ENCODE measurements at regions of chr13 and their contacts with region 1.

Region 1: GRCh38 chr13:99062593-99062992 is 84.7 kb upstream of the DOCK9 start:
- DNase-seq: no peak
- H3K4me3 ChIP-seq: no peak overlapping the region
- H3K4me3 Mint-ChIP-seq: peak overlapping the region in 1 of 2 donors; percentile 76
- H3K27ac ChIP-seq: no peak overlapping the region
- H3K27ac Mint-ChIP-seq: no peak overlapping the region
- H3K4me1 ChIP-seq: no peaks in the 10 kb centered on the region
- H3K4me1 Mint-ChIP-seq: peaks cover 5% of the 10 kb centered on the region
- H3K27me3 ChIP-seq: peaks cover 99% of the 10 kb centered on the region in 2 donors
- H3K27me3 Mint-ChIP-seq: peaks cover 92 to 99% (median 93%) of the 10 kb centered on the region in 3 donors
- CTCF ChIP-seq: no peak

Region 2: DNA sequence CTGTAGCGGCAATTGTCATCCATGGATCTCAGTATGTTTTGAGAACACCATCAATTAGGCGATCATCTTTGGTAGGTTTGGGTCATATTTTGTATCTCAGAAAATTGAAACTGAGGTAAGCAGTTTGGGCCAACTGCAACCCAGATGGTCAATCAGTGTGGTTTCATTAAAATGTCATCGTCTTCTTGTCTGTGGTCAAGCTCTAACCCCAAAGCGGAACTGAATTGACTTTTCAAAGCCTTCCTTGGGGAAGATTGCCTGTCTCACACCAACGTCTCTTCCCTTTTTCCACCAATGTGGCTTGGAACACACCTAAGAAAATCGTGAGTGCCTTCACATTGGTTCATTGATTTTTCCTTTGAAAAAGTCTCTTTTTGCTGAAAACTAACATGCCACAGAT is 81.7 kb after region 1 on chr13:
- intact Hi-C with region 1: loop called in 1 of 2 experiments (anchors 5 kb)
- DNase-seq: peak; percentile 42 to 65 (median 60)
- H3K4me3 ChIP-seq: no peak overlapping the region
- H3K4me3 Mint-ChIP-seq: peak overlapping the region in 1 of 2 donors; percentile 85
- H3K27ac ChIP-seq: no peak overlapping the region
- H3K27ac Mint-ChIP-seq: no peak overlapping the region
- H3K4me1 ChIP-seq: no peaks in the 10 kb centered on the region
- H3K4me1 Mint-ChIP-seq: peaks cover 4% of the 10 kb centered on the region
- H3K27me3 ChIP-seq: peaks cover 95 to 100% of the 10 kb centered on the region in 2 donors
- H3K27me3 Mint-ChIP-seq: peaks cover 98 to 100% (median 99%) of the 10 kb centered on the region in 3 donors
- CTCF ChIP-seq: no peak

Region 3: GRCh38 chr13:99406799-99407201 is 344.2 kb after region 1 on chr13:
- intact Hi-C with region 1: no loop called
- DNase-seq: peak; percentile 60 to 84 (median 76)
- H3K4me3 ChIP-seq: peak overlapping the region in 1 of 3 experiments; percentile 67
- H3K4me3 Mint-ChIP-seq: peak overlapping the region; percentile 58 to 84
- H3K27ac ChIP-seq: peak overlapping the region; percentile 49 to 87
- H3K27ac Mint-ChIP-seq: peak overlapping the region; percentile 87 to 98 (median 95)
- H3K4me1 ChIP-seq: peaks cover 32 to 39% of the 10 kb centered on the region in 2 donors
- H3K4me1 Mint-ChIP-seq: peaks cover 34% of the 10 kb centered on the region
- H3K27me3 ChIP-seq: no peaks in the 10 kb centered on the region
- H3K27me3 Mint-ChIP-seq: peaks cover 1 to 5% (median 2%) of the 10 kb centered on the region in 3 donors
- CTCF ChIP-seq: no peak

Region 4: GRCh38 chr13:100156788-100157187 is 1094.2 kb after region 1 on chr13:
- intact Hi-C with region 1: no loop called
- DNase-seq: no peak
- H3K4me3 ChIP-seq: no peak overlapping the region
- H3K4me3 Mint-ChIP-seq: no peak overlapping the region
- H3K27ac ChIP-seq: no peak overlapping the region
- H3K27ac Mint-ChIP-seq: no peak overlapping the region
- H3K4me1 ChIP-seq: no peaks in the 10 kb centered on the region
- H3K4me1 Mint-ChIP-seq: peaks cover 2% of the 10 kb centered on the region
- H3K27me3 ChIP-seq: no peaks in the 10 kb centered on the region
- H3K27me3 Mint-ChIP-seq: no peaks in the 10 kb centered on the region
- CTCF ChIP-seq: no peak

Measured in CD14-positive monocyte (primary cell).